Uterus (tissue), 4 donors: ENCODE measurements at regions of chr2 and their contacts with region 1.

Region 1: GRCh38 chr2:205754924-205755321 is 72.6 kb downstream of the NRP2 start:
- DNase-seq: no peak
- H3K4me3 ChIP-seq: no peak overlapping the region
- H3K27ac ChIP-seq: peak overlapping the region; percentile 74 to 89
- H3K4me1 ChIP-seq: peaks cover 5 to 16% of the 10 kb centered on the region in 2 donors
- H3K27me3 ChIP-seq: no peaks in the 10 kb centered on the region
- CTCF ChIP-seq: no peak
- POLR2A ChIP-seq: no peak

Region 2: GRCh38 chr2:205680067-205680466 is 74.9 kb before region 1 on chr2:
- intact Hi-C with region 1: loop called (anchors 10 kb)
- DNase-seq: peak; percentile 51 to 73
- H3K4me3 ChIP-seq: no peak overlapping the region
- H3K27ac ChIP-seq: peak overlapping the region; percentile 98
- H3K4me1 ChIP-seq: no peaks in the 10 kb centered on the region
- H3K27me3 ChIP-seq: no peaks in the 10 kb centered on the region
- CTCF ChIP-seq: peak; percentile 54 to 69 (median 62)
- POLR2A ChIP-seq: no peak

Region 3: DNA sequence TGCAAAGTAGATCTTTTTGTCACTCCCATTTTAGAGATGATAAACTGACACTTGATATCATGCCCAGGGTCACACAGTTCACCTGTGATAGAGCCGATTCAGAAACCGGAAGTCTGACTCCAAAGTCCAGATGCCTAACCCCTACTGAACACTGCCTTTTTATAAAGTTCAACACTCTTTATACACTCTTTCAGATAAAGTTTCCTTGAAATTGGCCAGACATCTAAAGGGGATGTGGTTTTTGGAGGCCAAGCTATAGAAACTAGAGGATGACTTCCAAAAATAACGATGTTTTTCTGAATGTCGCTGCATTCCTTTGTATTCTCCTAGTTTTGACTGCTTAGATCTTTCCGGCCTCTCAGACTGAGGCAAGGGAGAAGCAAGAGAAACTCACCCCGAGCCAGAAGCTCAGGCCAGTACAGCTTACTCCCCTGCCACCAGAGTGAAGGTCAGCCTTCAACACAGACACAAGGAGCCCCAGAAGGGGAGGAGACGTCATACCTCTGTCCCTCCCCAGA is 10.8 kb before region 1 on chr2:
- intact Hi-C with region 1: no loop called
- DNase-seq: no peak
- H3K4me3 ChIP-seq: no peak overlapping the region
- H3K27ac ChIP-seq: peak overlapping the region; percentile 33 to 67
- H3K4me1 ChIP-seq: peaks cover 0 to 2% of the 10 kb centered on the region in 2 donors
- H3K27me3 ChIP-seq: no peaks in the 10 kb centered on the region
- CTCF ChIP-seq: no peak
- POLR2A ChIP-seq: no peak